ENCODE measurements at regions of chr19 and their contacts with region 1.

Region 1: DNA sequence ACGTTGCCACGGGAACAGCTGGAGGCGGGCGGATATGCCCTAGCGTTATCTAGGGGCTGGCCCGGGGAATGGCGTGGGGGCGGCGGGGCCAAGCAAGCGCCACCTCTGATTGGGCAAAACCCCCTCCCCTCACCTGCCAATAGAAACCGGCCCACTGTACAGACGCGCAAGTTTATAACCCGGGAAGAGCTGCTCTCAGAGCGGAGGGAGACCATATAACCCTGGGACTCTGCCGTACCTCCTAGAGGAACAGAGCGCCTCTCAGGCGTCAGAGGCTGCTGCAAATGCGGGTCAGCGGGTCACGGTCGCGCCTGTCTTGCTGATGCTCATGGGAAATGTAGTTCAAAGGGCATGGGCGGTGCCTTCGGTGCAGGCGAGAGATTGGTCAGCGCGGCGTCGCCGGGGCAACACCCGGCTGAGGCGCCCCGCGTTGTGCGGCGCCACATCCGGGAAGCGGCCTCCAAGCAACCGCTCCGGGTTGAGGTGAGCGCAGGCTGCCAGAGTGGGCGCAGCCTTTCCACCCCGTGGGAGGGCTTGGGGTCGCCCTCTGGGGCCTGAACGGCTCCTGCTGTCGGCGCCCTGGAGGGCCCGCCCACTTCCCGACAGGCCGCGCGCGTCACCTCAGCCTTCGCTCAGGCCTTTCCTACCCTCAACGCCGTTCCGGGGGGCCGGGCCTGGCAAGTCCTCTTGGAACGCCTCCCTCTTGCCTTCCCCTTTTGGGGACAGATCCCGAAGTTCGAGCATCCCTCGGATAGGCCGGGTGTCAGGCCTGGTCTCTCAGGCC is at the start of gene ZNF446:
- DNase-seq: peak; percentile 96 to 99 (median 97)
- H3K4me3 ChIP-seq: peak within 1 kb of the TSS; percentile 69 to 94
- H3K4me3 Mint-ChIP-seq: peak within 1 kb of the TSS; percentile 91 to 98 (median 96)
- H3K27ac ChIP-seq: peak within 1 kb of the TSS; percentile 90
- H3K27ac Mint-ChIP-seq: peak within 1 kb of the TSS; percentile 97 to 100 (median 99)
- H3K4me1 ChIP-seq: peaks cover 17% of the 10 kb centered on the region
- H3K4me1 Mint-ChIP-seq: peaks cover 9 to 33% (median 19%) of the 10 kb centered on the region in 4 donors
- H3K27me3 ChIP-seq: no peaks in the 10 kb centered on the region
- H3K27me3 Mint-ChIP-seq: no peaks in the 10 kb centered on the region
- total RNA-seq, gene ZNF446: 16.4 to 19.5 TPM

Region 2: DNA sequence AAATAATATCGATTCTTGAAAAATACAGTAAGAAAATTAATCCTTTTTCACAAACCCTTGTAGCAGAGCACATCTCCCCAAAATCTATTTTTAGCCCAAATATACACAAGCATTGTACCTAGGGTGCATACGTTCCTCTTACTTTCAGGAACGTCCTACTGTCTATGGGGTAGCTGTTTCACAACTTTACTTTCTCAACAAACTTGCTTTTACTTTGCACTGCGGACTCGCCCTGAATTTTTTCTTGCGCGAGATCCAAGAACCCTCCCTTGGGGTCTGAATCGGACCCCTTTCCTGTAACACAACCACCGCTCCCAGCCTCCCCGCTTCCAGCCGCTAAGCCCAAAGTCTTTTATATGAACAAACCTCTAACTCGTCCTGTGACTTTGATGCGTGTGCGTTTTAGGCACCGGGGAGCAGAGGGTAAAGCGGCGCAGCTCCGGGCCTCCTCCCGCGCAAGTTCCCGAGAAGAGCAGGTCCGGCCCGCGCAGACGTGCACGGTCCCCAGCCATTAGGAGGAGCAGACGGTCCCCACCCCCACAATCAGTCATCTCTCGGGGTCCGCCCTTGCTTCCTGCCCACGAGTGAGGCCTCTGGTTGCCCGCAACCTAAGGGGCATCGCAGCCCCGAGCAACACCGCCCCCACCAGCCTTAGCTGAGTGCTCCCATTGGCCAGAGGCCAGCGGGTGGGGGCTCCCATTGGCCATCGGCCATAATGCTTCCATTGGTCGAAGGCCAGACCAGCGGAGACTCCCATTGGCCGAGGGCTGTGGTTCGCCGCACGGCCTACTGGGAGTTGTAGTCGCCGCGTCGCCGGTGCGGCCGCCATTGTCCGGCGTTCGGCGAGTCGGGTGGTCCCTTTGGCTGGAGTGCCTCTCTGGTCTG is 197.5 kb before region 1 on chr19 and contains the start of gene ZNF8:
- CTCF ChIA-PET with region 1: no interaction called
- POLR2A ChIA-PET with region 1: no interaction called
- intact Hi-C with region 1: loop called (anchors 1 kb)
- DNase-seq: peak; percentile 93 to 97 (median 95)
- H3K4me3 ChIP-seq: peak within 1 kb of the TSS; percentile 62 to 92
- H3K4me3 Mint-ChIP-seq: peak within 1 kb of the TSS; percentile 93 to 100 (median 98)
- H3K27ac ChIP-seq: peak within 1 kb of the TSS; percentile 73
- H3K27ac Mint-ChIP-seq: peak within 1 kb of the TSS; percentile 91 to 99 (median 96)
- H3K4me1 ChIP-seq: peaks cover 36% of the 10 kb centered on the region
- H3K4me1 Mint-ChIP-seq: peaks cover 28 to 57% (median 36%) of the 10 kb centered on the region in 4 donors
- H3K27me3 ChIP-seq: no peaks in the 10 kb centered on the region
- H3K27me3 Mint-ChIP-seq: no peaks in the 10 kb centered on the region
- total RNA-seq, gene ZNF8: 9.5 to 10.2 TPM

Region 3: DNA sequence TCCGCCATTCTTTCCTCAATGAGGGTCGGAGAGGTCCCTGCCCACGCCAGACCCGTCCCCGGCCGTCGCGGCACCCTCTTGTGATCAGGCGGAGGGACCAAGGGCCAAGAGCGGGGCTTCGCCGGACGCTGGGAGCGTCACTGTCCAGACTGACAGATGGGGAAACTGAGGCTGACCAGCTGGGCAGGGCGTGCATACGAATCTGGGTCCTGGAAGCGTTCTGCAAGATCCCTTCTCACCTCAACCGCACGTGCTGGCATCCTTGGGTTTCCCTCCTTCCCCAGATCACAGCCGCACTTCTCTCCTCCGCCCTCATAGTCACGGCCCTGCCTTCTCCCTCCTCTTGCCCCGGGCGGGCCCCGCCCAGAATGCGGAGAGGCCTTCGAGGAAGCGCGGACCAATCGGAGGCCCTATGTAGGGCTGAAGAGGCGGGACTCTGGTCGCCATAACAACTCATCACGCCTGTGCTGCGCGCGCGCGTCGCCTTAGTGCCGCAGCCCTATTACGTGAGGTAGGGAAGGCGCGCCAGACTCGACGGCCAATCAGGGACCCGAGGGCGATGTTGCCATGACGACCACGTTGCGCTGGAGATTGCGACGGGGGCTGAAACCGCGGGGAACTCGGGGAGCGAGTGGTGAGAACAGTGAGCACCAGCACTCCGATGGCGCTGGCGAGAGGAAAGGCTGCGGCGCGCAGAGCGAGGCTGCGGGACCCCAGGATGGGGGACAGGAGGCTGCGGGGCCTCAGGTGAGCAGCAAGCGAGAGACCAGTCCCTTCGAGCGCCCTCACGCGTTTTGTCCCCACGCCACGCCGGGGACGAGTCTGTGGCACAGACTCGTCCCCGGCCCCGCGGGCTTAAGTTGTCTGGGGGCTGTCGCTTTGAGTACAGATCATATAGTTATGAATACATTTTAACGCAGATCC is 74.7 kb before region 1 on chr19:
- CTCF ChIA-PET with region 1: no interaction called
- POLR2A ChIA-PET with region 1: no interaction called
- intact Hi-C with region 1: loop called (anchors 1 kb)
- DNase-seq: peak; percentile 98 to 100 (median 99)
- H3K4me3 ChIP-seq: peak overlapping the region; percentile 57 to 59
- H3K4me3 Mint-ChIP-seq: peak overlapping the region; percentile 87 to 97 (median 91)
- H3K27ac ChIP-seq: peak overlapping the region; percentile 74
- H3K27ac Mint-ChIP-seq: peak overlapping the region; percentile 89 to 99 (median 97)
- H3K4me1 ChIP-seq: peaks cover 20% of the 10 kb centered on the region
- H3K4me1 Mint-ChIP-seq: peaks cover 5 to 20% (median 10%) of the 10 kb centered on the region in 4 donors
- H3K27me3 ChIP-seq: peaks cover 8% of the 10 kb centered on the region
- H3K27me3 Mint-ChIP-seq: peaks cover 6 to 9% of the 10 kb centered on the region in 2 donors

Region 4: GRCh38 chr19:58439576-58440554 is 36.0 kb before region 1 on chr19 and contains the start of gene ZNF132:
- CTCF ChIA-PET with region 1: no interaction called
- POLR2A ChIA-PET with region 1: interaction called, 3 read pairs
- intact Hi-C with region 1: loop called (anchors 1 kb)
- DNase-seq: peak; percentile 93 to 99 (median 98)
- H3K4me3 ChIP-seq: peak within 1 kb of the TSS; percentile 72 to 80
- H3K4me3 Mint-ChIP-seq: peak within 1 kb of the TSS; percentile 87 to 97 (median 96)
- H3K27ac ChIP-seq: peak within 1 kb of the TSS; percentile 69
- H3K27ac Mint-ChIP-seq: peak within 1 kb of the TSS; percentile 82 to 100 (median 99)
- H3K4me1 ChIP-seq: peaks cover 18% of the 10 kb centered on the region
- H3K4me1 Mint-ChIP-seq: peaks cover 12 to 30% (median 22%) of the 10 kb centered on the region in 4 donors
- H3K27me3 ChIP-seq: no peaks in the 10 kb centered on the region
- H3K27me3 Mint-ChIP-seq: peaks cover 2 to 3% of the 10 kb centered on the region in 2 donors
- total RNA-seq, gene ZNF132: 9.5 to 11.7 TPM

Region 5: DNA sequence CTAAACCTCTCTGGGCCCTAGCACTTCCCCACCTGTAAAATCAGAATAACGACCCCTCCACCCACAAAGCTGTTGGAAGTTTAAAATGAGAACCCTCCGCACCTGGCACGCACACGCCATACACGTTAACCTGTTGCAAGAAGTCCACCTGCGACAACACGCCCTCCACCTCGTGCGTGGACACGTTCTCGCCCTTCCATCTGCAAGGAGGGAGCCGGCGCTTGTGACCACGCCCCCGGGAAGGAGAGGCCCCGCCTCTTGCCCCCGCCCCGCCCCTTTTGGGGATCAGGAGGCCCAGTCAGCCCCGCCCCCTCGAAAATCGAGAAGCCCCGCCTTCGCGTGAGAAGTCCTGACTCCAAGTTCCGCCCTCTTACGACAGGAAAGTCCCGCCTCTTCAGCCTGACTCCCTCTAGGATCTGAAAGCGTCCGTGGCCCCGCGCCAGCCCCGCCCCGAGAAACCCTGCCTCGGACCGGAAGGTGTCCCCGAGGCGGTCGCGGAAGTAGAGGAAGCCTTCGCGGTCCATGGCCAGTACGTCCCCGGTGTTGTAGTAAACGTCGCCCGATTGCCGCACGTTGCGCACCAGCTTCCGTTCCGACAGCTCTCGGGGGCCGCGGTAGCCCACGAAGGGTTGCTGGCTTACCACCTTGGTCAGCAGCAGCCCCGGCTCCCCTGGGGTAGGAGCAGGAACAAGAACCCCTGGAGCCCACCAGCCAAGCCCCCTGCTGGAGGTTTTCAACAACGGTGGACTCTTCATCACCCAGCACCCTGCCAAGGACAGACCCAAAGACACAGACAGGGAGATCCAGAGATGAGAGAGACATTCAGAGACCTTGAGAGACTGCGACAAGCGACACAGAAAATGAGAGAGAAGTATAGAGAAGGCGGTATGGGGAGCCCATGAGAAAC is 23.4 kb after region 1 on chr19:
- CTCF ChIA-PET with region 1: no interaction called
- POLR2A ChIA-PET with region 1: interaction called, 6 read pairs
- intact Hi-C with region 1: loop called (anchors 1 kb)
- DNase-seq: peak; percentile 89 to 96 (median 90)
- H3K4me3 ChIP-seq: peak overlapping the region; percentile 34 to 52
- H3K4me3 Mint-ChIP-seq: peak overlapping the region; percentile 86 to 94 (median 91)
- H3K27ac ChIP-seq: peak overlapping the region; percentile 66
- H3K27ac Mint-ChIP-seq: peak overlapping the region; percentile 77 to 98 (median 96)
- H3K4me1 ChIP-seq: peaks cover 16% of the 10 kb centered on the region
- H3K4me1 Mint-ChIP-seq: peaks cover 14 to 25% (median 17%) of the 10 kb centered on the region in 4 donors
- H3K27me3 ChIP-seq: no peaks in the 10 kb centered on the region
- H3K27me3 Mint-ChIP-seq: no peaks in the 10 kb centered on the region

Region 6: DNA sequence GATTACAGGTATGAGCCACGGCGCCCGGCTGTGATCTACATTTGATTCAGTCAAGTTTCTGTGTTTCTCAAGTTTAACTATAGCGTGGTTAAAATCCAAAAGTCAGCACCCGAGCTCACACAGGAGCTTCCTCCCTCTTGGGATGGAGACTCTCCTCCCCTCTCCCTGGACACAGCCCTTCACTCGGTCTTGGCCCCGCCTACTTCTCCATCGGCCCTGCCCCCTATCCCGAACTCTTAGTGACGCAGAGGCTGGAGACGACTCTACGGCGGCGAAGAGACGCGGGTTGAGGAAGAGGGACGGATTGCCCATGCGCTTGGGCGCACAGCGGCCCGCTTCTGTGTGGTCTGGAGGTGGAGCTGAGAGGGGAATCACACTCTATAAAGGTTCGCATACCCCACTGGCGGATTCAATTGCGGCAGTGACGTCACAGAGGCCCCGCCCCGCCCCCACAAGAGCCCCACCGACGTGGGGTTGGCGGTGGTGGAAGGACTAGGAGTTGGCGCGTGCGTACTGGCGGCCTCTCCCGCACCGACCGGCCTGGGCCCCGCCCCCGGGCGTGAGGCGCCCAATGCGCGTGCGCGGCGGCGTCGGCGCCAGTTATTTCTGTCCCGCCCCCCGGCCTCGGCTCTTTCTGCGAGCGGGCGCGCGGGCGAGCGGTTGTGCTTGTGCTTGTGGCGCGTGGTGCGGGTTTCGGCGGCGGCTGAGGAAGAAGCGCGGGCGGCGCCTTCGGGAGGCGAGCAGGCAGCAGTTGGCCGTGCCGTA is 68.1 kb after region 1 on chr19 and contains the start of gene TRIM28:
- CTCF ChIA-PET with region 1: no interaction called
- POLR2A ChIA-PET with region 1: interaction called, 11 read pairs
- intact Hi-C with region 1: no loop called
- DNase-seq: peak; percentile 100
- H3K4me3 ChIP-seq: peak within 1 kb of the TSS; percentile 86 to 87
- H3K4me3 Mint-ChIP-seq: peak within 1 kb of the TSS; percentile 91 to 97 (median 95)
- H3K27ac ChIP-seq: peak within 1 kb of the TSS; percentile 78
- H3K27ac Mint-ChIP-seq: peak within 1 kb of the TSS; percentile 95 to 100 (median 99)
- H3K4me1 ChIP-seq: peaks cover 30% of the 10 kb centered on the region
- H3K4me1 Mint-ChIP-seq: peaks cover 20 to 39% (median 27%) of the 10 kb centered on the region in 4 donors
- H3K27me3 ChIP-seq: no peaks in the 10 kb centered on the region
- H3K27me3 Mint-ChIP-seq: peaks cover 0 to 7% of the 10 kb centered on the region in 2 donors
- total RNA-seq, gene TRIM28: 342 to 348 TPM